ENCODE measurements at regions of chr2 and their contacts with region 1.

Region 1: GRCh38 chr2:230068016-230068650 is 591 bp downstream of the SLC16A14 start:
- DNase-seq: peak; percentile 62
- H3K4me3 Mint-ChIP-seq: peak overlapping the region; percentile 81
- H3K27ac Mint-ChIP-seq: no peak overlapping the region
- H3K4me1 Mint-ChIP-seq: peaks cover 18% of the 10 kb centered on the region
- H3K27me3 Mint-ChIP-seq: peaks cover 15% of the 10 kb centered on the region

Region 2: GRCh38 chr2:229800997-229801754 is 267.0 kb before region 1 on chr2:
- CTCF ChIA-PET with region 1: interaction called, 6 read pairs
- POLR2A ChIA-PET with region 1: no interaction called
- intact Hi-C with region 1: loop called (anchors 5 kb)
- DNase-seq: peak; percentile 79
- H3K4me3 Mint-ChIP-seq: no peak overlapping the region
- H3K27ac Mint-ChIP-seq: no peak overlapping the region
- H3K4me1 Mint-ChIP-seq: no peaks in the 10 kb centered on the region
- H3K27me3 Mint-ChIP-seq: no peaks in the 10 kb centered on the region

Region 3: DNA sequence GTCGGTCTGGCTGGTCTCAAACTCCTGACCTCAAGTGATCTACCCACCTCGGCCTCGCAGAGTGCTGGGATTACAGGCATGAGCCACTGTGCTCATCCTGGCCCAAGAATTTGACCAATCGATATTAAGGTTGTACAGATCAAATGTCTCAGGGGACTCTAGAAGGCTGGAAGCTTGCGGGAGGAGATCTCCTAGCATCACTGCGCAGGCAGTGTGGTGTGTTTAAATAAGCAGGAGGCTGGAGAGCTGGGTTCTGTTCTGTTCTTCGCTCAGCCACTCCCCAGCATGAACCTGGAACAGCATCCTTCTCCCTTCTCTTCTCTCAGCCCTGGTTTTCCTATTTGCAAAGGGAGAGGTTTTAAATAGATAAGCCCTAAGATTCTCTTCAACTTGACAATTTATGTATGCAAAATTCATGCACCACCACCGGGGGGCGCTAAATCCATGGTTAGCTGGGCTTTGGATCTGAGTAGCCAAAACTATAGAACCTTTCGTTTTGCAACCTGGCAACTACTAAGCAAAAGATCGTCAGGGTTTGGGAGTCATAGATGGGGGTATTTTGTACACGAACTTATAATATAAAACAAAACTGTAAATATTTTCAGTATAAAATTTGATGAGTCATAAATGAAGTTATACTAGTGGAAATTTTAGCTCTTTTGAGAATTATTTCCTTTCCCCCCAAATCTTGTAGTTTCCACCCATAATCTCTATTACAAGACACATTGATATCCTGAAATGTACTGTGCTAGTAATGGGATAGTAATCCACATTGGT is 60.0 kb before region 1 on chr2:
- CTCF ChIA-PET with region 1: interaction called, 30 read pairs
- POLR2A ChIA-PET with region 1: no interaction called
- intact Hi-C with region 1: loop called (anchors 1 kb)
- DNase-seq: peak; percentile 90
- H3K4me3 Mint-ChIP-seq: no peak overlapping the region
- H3K27ac Mint-ChIP-seq: no peak overlapping the region
- H3K4me1 Mint-ChIP-seq: peaks cover 5% of the 10 kb centered on the region
- H3K27me3 Mint-ChIP-seq: no peaks in the 10 kb centered on the region

Region 4: DNA sequence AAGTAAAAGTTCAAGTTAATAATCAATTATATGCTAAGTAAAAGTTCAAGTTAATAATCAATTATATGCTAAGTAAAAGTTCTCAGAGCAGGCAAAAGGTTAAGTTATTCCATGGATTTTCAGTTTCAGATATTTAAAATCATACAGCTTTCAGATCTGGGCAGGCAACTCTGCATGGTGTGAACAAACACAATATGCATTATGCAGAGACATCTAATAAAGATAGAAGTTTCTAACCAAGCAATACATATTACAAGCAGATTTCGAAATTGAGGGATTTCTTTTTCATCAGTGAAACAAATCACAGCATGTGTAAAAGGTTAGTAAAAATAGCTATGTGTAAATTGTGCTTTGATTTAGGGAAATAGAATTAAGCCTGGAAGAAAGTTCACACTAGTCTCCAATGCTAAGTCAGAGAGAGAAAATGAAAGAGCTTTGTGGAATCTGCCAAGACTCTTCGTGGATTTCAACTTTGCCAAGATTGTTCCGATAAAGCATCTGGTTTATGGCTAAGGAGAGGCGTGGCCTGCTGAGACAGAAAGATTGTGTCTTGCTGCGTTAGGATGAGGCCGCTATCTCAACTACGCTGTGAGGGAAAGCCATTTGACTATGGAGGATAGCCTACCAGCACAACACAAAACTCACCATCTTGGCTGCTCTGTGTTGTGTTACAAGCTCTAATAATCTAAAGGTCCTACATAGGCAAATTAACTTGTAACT is 60.6 kb after region 1 on chr2:
- CTCF ChIA-PET with region 1: interaction called, 10 read pairs
- POLR2A ChIA-PET with region 1: no interaction called
- intact Hi-C with region 1: no loop called
- DNase-seq: no peak
- H3K4me3 Mint-ChIP-seq: no peak overlapping the region
- H3K27ac Mint-ChIP-seq: no peak overlapping the region
- H3K4me1 Mint-ChIP-seq: peaks cover 5% of the 10 kb centered on the region
- H3K27me3 Mint-ChIP-seq: no peaks in the 10 kb centered on the region

Region 5: GRCh38 chr2:230268606-230269243 is 200.6 kb after region 1 on chr2:
- CTCF ChIA-PET with region 1: no interaction called
- POLR2A ChIA-PET with region 1: no interaction called
- intact Hi-C with region 1: no loop called
- DNase-seq: peak; percentile 32
- H3K4me3 Mint-ChIP-seq: no peak overlapping the region
- H3K27ac Mint-ChIP-seq: peak overlapping the region; percentile 59
- H3K4me1 Mint-ChIP-seq: peaks cover 52% of the 10 kb centered on the region
- H3K27me3 Mint-ChIP-seq: no peaks in the 10 kb centered on the region

Region 6: DNA sequence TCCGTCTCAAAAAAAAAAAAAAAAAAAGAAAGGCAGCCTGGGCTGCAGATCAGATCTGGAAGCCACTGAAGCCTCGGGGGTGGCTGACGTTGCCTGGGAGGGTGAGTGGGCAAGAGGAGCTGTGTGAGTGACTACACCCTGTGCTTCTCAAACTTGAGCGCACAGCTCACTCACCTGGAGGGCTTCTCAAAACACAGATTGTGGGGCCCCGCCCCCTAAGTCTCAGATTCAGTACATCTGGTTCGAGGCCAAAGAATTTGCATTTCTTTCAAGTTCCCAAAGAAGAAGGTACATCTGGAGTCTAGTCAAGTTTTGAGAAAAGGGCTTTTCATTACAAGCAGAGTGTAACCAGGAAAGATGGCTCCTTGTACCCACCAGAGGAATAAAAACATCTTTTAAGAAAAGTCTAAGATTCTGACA is 546.8 kb after region 1 on chr2:
- CTCF ChIA-PET with region 1: interaction called, 4 read pairs
- POLR2A ChIA-PET with region 1: no interaction called
- intact Hi-C with region 1: loop called (anchors 2 kb)
- DNase-seq: peak; percentile 78
- H3K4me3 Mint-ChIP-seq: no peak overlapping the region
- H3K27ac Mint-ChIP-seq: peak overlapping the region; percentile 56
- H3K4me1 Mint-ChIP-seq: peaks cover 22% of the 10 kb centered on the region
- H3K27me3 Mint-ChIP-seq: no peaks in the 10 kb centered on the region